SK-N-SH (cell line): ENCODE measurements at regions of chr3 and their contacts with region 1.

Region 1: DNA sequence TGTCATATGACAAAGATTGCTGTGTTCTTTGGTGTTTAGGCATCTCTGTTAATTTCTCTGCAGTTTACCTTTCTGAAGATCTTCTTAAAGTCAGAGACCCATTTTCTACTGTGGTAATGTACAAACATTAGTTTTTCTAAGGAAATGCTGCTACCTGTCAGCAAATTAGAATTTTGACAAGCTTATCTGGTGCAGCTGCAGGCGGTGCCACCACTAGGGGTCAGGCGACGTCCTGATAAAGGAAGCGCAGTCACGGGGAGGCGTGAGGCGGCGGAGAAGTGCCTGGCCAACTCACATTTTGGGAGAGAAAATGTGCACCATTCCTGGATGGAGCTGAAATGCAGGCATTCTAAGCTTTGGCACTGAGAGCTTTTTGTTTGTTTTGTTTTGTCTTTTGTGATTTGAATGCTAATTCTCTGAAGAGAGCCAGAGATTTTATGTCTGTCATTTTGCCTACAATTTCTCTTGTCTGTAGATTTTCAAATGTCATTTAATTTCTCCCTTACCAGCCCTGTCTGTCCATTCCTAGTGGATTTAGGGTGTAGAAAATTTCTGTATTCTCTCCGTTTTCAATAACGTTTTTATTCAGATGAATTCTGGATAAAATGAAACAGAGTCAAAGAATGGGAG is 24.9 kb upstream of the SIAH2 start:
- DNase-seq: peak; percentile 74
- H3K4me3 ChIP-seq: peak overlapping the region in 1 of 2 experiments; percentile 51; a peak in 1 of 4 replicates
- H3K27ac ChIP-seq: no peak overlapping the region
- H3K4me1 ChIP-seq: no peaks in the 10 kb centered on the region; a peak in 1 of 4 replicates
- H3K27me3 ChIP-seq: no peaks in the 10 kb centered on the region; the same call in 1 of the 2 replicates
- CTCF ChIP-seq: peak; percentile 95
- EP300 ChIP-seq: no peak
- RAD21 ChIP-seq: peak; percentile 84

Region 2: DNA sequence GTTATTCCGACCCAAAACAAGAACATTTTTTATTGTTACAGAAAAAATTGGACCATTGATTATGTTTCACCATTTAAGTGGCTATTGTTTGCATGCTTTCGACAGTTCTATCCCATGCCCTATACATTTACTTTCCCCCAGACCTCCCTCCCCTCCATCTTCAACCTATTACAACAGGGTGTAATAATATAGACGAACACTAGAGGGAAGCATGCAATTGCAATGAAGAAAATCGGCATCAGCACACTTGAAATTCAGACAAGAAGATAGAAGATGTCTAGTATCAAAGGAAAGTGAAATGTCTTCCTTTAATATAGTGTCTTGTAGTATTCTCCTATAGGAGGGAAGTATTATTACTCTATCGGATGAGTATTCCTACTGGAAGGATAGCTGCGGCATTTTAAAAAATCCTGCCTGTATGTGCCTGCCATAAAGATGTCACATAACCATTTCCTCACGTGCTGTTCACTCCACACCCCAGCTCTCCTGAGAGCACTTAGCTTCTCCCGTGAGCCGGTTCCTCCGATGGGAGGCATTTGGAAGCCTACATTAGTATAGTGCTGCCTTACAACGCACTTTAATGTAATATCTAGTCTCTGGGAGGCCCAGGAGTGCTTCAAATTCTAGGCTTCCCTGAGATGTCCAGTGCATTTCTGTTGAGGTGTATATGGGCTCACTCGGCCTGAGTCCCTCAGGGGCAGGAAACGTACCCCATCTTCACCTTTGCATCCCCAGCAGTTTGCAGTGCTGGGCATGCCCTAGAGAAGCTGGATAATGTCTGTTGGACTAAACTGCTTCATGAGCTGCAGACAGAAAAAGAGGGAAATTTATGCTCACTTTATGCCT is 66.3 kb before region 1 on chr3:
- CTCF ChIA-PET with region 1: interaction called, 14 read pairs
- POLR2A ChIA-PET with region 1: no interaction called
- DNase-seq: peak; percentile 73
- H3K4me3 ChIP-seq: no peak overlapping the region
- H3K27ac ChIP-seq: no peak overlapping the region
- H3K4me1 ChIP-seq: peaks cover 0 to 3% of the 10 kb centered on the region in 2 experiments; a peak in 1 of 4 replicates
- H3K27me3 ChIP-seq: no peaks in the 10 kb centered on the region
- CTCF ChIP-seq: peak; percentile 83
- EP300 ChIP-seq: no peak
- RAD21 ChIP-seq: peak; percentile 91

Region 3: GRCh38 chr3:150775091-150775501 is 12.8 kb before region 1 on chr3:
- CTCF ChIA-PET with region 1: interaction called, 72 read pairs
- POLR2A ChIA-PET with region 1: no interaction called
- DNase-seq: no peak
- H3K4me3 ChIP-seq: no peak overlapping the region
- H3K27ac ChIP-seq: no peak overlapping the region
- H3K4me1 ChIP-seq: peaks cover 0 to 4% of the 10 kb centered on the region in 2 experiments; a peak in 2 of 4 replicates
- H3K27me3 ChIP-seq: no peaks in the 10 kb centered on the region
- CTCF ChIP-seq: no peak
- EP300 ChIP-seq: no peak
- RAD21 ChIP-seq: no peak

Region 4: GRCh38 chr3:150806185-150806835 is 18.5 kb after region 1 on chr3:
- CTCF ChIA-PET with region 1: interaction called, 23 read pairs
- POLR2A ChIA-PET with region 1: no interaction called
- DNase-seq: no peak
- H3K4me3 ChIP-seq: no peak overlapping the region
- H3K27ac ChIP-seq: no peak overlapping the region
- H3K4me1 ChIP-seq: no peaks in the 10 kb centered on the region
- H3K27me3 ChIP-seq: peaks cover 43% of the 10 kb centered on the region
- CTCF ChIP-seq: no peak
- EP300 ChIP-seq: no peak
- RAD21 ChIP-seq: no peak

Region 5: DNA sequence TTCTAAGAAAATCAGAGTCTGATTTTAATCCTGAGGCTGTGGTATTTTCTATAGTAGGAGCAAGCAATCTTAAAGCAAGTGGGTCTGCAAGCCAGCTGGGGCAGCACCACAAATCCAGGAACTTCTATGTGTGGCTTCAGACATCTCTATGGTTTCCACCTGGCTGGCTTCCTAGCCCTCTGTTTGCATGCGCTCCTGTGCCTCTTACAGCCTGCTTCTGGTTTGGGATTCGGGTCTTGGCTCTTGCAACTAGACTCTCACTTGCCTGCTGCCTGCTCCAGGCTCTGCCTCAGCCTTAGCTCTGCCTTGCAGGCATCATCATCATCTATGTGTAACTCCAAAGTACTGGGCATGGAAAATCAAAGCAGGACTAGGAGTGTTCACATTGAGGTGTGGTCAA is 74.0 kb after region 1 on chr3:
- CTCF ChIA-PET with region 1: interaction called, 38 read pairs
- POLR2A ChIA-PET with region 1: no interaction called
- DNase-seq: no peak
- H3K4me3 ChIP-seq: no peak overlapping the region
- H3K27ac ChIP-seq: no peak overlapping the region
- H3K4me1 ChIP-seq: no peaks in the 10 kb centered on the region
- H3K27me3 ChIP-seq: peaks cover 42% of the 10 kb centered on the region; the same call in 1 of the 2 replicates
- CTCF ChIP-seq: no peak
- EP300 ChIP-seq: no peak
- RAD21 ChIP-seq: no peak

Region 6: GRCh38 chr3:151146071-151146730 is 358.3 kb after region 1 on chr3:
- CTCF ChIA-PET with region 1: interaction called, 16 read pairs
- POLR2A ChIA-PET with region 1: no interaction called
- DNase-seq: peak; percentile 71
- H3K4me3 ChIP-seq: peak overlapping the region in 1 of 2 experiments; percentile 27; a peak in 2 of 4 replicates
- H3K27ac ChIP-seq: peak overlapping the region in 1 of 2 experiments; percentile 72; a peak in 2 of 4 replicates
- H3K4me1 ChIP-seq: peaks cover 8 to 16% of the 10 kb centered on the region in 2 experiments; a peak in 3 of 4 replicates
- H3K27me3 ChIP-seq: peaks cover 26% of the 10 kb centered on the region
- CTCF ChIP-seq: peak; percentile 87
- EP300 ChIP-seq: no peak
- RAD21 ChIP-seq: peak; percentile 95